B cell (primary cell): ENCODE measurements at regions of chr9 and their contacts with region 1.

Region 1: GRCh38 chr9:114616653-114617520 is 5.8 kb downstream of the TMEM268 start:
- DNase-seq: peak; percentile 88
- ATAC-seq: peak; percentile 80
- H3K4me3 ChIP-seq: peak overlapping the region in 1 of 5 experiments; percentile 18
- H3K4me3 Mint-ChIP-seq: peak overlapping the region; percentile 79
- H3K27ac ChIP-seq: peak overlapping the region; percentile 81 to 89
- H3K27ac Mint-ChIP-seq: peak overlapping the region; percentile 98
- H3K4me1 ChIP-seq: peaks cover 74 to 94% of the 10 kb centered on the region in 2 donors
- H3K4me1 Mint-ChIP-seq: peaks cover 72% of the 10 kb centered on the region
- H3K27me3 ChIP-seq: no peaks in the 10 kb centered on the region
- H3K27me3 Mint-ChIP-seq: no peaks in the 10 kb centered on the region
- CTCF ChIP-seq: no peak

Region 2: DNA sequence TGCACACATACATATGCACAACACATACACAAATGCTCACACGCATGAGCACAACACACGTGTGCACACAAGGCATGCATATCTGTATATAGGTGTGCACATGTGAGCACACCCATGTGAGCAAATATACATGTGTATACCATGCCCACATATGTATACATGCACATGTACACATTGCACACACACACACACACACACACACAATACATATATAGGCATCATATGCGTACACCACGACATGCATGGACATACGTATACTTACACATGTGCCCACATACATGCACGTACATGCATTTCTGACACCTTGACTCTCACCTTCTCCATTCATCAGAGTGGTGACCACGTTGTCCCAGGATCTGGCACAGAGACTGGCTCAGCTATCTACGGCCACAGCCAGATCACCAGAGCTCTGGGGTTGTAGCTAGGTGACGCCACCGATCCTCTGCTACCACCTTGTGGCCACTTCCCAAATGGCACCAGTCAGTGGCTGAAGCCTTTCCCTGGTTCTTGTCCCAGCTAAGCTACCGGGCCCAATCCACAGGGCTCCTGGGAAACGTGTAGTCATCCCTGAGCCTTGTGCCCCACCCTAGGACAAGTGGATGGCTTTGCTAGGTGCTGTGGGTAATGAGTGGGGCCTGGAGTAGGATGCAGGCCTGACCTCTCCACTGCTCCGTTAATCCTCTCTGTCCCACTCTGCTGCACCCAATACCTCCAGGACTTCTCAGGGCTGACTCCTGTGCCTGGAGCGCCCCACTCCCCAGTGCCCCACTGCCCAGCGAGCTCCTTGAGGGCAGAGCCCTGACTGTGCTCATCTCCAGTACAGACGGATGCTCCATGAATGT is 959.0 kb before region 1 on chr9:
- CTCF ChIA-PET with region 1: no interaction called
- POLR2A ChIA-PET with region 1: no interaction called
- intact Hi-C with region 1: no loop called
- DNase-seq: peak; percentile 86
- ATAC-seq: peak; percentile 93
- H3K4me3 ChIP-seq: no peak overlapping the region
- H3K4me3 Mint-ChIP-seq: no peak overlapping the region
- H3K27ac ChIP-seq: no peak overlapping the region
- H3K27ac Mint-ChIP-seq: peak overlapping the region; percentile 71
- H3K4me1 ChIP-seq: no peaks in the 10 kb centered on the region
- H3K4me1 Mint-ChIP-seq: no peaks in the 10 kb centered on the region
- H3K27me3 ChIP-seq: peaks cover 0 to 17% (median 7%) of the 10 kb centered on the region in 4 experiments
- H3K27me3 Mint-ChIP-seq: peaks cover 34% of the 10 kb centered on the region
- CTCF ChIP-seq: peak; percentile 92

Region 3: DNA sequence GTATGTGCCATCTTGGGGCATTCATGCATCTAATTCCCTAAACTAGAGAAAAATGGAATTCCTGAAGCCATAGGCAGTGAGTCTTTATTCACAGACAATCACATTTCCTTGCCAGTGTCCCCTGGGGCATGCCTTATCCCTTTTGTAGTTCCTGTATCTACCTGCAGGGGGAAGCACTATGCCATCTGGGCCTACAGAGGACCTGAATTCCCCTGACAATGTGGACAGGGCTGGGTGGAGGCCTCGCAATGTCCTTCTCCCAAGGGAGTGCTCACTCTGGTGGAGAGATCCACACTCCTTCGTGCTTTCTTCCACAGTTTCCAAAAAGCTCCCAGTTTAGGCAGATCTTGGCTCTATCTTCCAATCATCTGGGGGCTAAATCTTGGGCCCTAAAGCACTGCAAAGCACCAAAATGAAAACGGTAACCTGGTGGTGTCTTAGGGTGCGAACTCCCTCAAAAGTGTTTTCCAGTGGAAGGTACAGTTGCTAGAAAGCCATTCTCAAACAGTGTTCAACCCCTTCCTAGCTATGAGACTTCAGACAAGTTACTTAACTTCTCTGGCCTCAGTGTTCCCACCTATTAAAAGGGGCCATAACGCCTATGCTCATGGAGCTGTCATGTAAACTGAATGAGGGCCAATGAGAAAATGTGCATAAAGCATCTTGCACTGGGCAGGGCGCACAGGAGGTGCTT is 129.1 kb before region 1 on chr9:
- CTCF ChIA-PET with region 1: interaction called, 3 read pairs
- POLR2A ChIA-PET with region 1: no interaction called
- intact Hi-C with region 1: loop called (anchors 2 kb)
- DNase-seq: peak; percentile 81
- ATAC-seq: peak; percentile 75
- H3K4me3 ChIP-seq: no peak overlapping the region
- H3K4me3 Mint-ChIP-seq: no peak overlapping the region
- H3K27ac ChIP-seq: no peak overlapping the region
- H3K27ac Mint-ChIP-seq: peak overlapping the region; percentile 16
- H3K4me1 ChIP-seq: peaks cover 22 to 23% of the 10 kb centered on the region in 2 donors
- H3K4me1 Mint-ChIP-seq: peaks cover 40% of the 10 kb centered on the region
- H3K27me3 ChIP-seq: no peaks in the 10 kb centered on the region
- H3K27me3 Mint-ChIP-seq: no peaks in the 10 kb centered on the region
- CTCF ChIP-seq: peak; percentile 90

Region 4: DNA sequence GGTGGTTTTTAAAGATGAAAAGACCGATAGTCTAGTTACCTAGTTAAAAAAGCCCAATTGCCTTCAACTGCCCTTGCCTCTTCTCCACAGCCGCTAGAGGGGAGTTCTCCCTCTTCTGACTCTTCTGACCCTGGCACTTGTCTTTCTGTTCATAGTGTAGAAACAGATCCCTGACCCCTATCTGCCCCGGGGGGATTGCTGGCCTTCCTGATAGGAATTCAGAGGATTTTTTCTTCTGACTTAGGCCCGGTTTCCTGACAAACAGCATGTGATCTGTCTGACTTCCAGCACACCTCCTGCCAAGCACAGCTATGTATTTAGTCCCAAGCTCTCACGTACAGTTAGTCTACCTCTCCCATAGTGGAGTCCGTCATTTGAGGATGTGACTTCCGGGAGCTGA is 10.8 kb before region 1 on chr9:
- CTCF ChIA-PET with region 1: interaction called, 11 read pairs
- POLR2A ChIA-PET with region 1: interaction called, 8 read pairs
- intact Hi-C with region 1: loop called (anchors 1 kb)
- DNase-seq: no peak
- ATAC-seq: no peak
- H3K4me3 ChIP-seq: no peak overlapping the region
- H3K4me3 Mint-ChIP-seq: no peak overlapping the region
- H3K27ac ChIP-seq: no peak overlapping the region
- H3K27ac Mint-ChIP-seq: peak overlapping the region; percentile 53
- H3K4me1 ChIP-seq: peaks cover 41 to 46% of the 10 kb centered on the region in 2 donors
- H3K4me1 Mint-ChIP-seq: peaks cover 50% of the 10 kb centered on the region
- H3K27me3 ChIP-seq: no peaks in the 10 kb centered on the region
- H3K27me3 Mint-ChIP-seq: no peaks in the 10 kb centered on the region
- CTCF ChIP-seq: no peak